Left cardiac atrium (tissue), 4 donors: ENCODE measurements at regions of chr18 and their contacts with region 1.

Region 1: DNA sequence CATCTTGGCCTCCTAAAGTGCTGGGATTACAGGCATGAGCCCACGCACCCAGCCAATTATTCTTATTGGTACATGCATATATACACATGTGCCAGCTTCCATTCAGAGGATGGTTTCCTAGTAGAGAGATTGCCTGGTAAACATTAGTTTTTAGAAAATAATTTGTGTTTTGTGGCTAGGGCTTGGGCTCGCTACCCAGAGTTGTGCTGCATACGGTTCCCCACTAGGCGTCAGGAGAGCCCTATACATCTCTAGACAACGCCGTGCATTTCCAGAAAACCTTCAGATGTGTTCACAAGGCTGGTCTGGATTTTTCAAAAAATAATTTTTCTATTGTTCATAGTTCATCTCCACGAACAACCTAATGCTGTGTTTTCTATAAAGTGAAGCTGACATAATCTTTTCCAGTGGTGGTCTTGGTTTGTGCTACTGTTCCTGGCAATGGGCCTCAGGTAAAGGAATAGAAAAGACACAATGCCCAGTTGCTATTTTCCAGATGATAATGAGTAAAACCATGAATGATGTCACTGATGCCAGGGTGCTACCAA is 14.7 kb upstream of the AFG3L2 start:
- DNase-seq: peak; percentile 56
- ATAC-seq: peak; percentile 94 to 96

Region 2: GRCh38 chr18:12564378-12564777 is 172.7 kb after region 1 on chr18:
- intact Hi-C with region 1: no loop called
- DNase-seq: no peak
- ATAC-seq: no peak

Region 3: GRCh38 chr18:12657684-12658425 is 266.2 kb after region 1 on chr18 and contains the start of gene SPIRE1:
- intact Hi-C with region 1: loop called in 1 of 2 experiments (anchors 2 kb)
- DNase-seq: peak; percentile 82
- ATAC-seq: peak; percentile 91 to 93
- total RNA-seq, gene SPIRE1: 31.5 to 46.4 TPM

Region 4: DNA sequence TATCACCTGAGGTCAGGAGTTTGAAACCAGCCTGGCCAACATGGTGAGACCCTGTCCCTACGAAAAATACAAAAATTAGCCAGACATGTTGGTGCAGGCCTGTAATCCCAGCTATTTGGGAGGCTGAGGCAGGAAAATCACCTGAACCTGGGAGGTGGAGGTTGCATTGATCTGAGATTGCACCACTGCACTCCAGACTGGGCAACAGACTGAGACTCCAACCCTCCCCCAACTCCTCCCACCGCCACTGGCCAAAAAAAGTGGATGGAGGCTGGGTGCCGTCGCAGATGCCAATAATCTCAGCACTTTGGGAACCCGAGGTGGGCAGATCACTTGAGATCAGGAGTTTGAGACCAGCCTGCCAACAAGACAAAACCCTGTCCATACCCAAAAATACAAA is 276.3 kb after region 1 on chr18:
- intact Hi-C with region 1: loop called in 1 of 2 experiments (anchors 5 kb)
- DNase-seq: no peak
- ATAC-seq: no peak

Region 5: GRCh38 chr18:12934454-12935071 is 542.9 kb after region 1 on chr18:
- intact Hi-C with region 1: loop called in 1 of 2 experiments (anchors 10 kb)
- DNase-seq: peak; percentile 88
- ATAC-seq: peak; percentile 94 to 96